Psoas muscle (tissue), 8 donors: ENCODE measurements at regions of chr1 and their contacts with region 1.

Region 1: GRCh38 chr1:199335496-199335895 is 692.0 kb upstream of the NR5A2 start:
- DNase-seq: no peak
- ATAC-seq: no peak
- H3K4me3 ChIP-seq: no peak overlapping the region
- H3K27ac ChIP-seq: no peak overlapping the region
- H3K4me1 ChIP-seq: no peaks in the 10 kb centered on the region
- H3K27me3 ChIP-seq: no peaks in the 10 kb centered on the region
- CTCF ChIP-seq: no peak

Region 2: DNA sequence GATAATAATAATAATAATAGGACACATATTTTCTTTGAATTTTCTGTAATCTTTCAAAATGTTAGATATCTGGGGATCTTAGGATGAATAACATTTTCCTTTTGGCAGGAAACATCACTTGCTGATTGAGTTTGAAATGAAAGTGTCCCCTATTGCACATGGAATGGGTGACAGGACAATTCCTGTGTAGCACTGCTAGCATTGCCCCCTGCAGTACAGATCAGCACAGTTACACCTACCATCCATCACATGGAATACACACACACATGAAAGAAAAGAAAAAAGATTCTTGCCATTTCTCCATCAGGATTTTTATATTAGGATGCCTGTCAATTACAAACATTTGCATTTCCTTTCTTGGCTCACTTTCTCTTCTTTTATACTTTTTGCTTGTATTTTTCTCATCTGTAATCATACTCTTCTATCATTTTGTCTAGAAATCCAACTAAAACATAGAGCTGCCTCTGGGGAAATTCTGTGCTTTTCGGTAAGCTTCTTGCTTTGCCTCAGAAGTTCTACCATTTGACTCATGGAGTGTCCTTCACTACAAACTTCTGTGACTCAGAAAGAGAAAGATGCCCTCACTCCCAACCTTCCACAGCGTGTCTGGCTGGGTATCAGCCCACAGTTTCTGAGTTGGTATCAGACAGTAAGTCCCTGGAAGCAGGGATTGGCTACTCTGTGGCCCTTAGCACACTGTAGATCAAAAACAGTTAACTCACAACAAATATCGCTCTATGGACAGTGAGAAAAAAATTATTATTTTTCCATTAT is 55.4 kb before region 1 on chr1:
- intact Hi-C with region 1: loop called in 1 of 2 experiments (anchors 2 kb)
- DNase-seq: no peak
- ATAC-seq: no peak
- H3K4me3 ChIP-seq: no peak overlapping the region
- H3K27ac ChIP-seq: no peak overlapping the region
- H3K4me1 ChIP-seq: no peaks in the 10 kb centered on the region
- H3K27me3 ChIP-seq: no peaks in the 10 kb centered on the region
- CTCF ChIP-seq: no peak

Region 3: GRCh38 chr1:199597152-199597551 is 261.7 kb after region 1 on chr1:
- intact Hi-C with region 1: no loop called
- DNase-seq: no peak
- ATAC-seq: no peak
- H3K4me3 ChIP-seq: no peak overlapping the region
- H3K27ac ChIP-seq: no peak overlapping the region
- H3K4me1 ChIP-seq: no peaks in the 10 kb centered on the region
- H3K27me3 ChIP-seq: no peaks in the 10 kb centered on the region
- CTCF ChIP-seq: no peak